ENCODE measurements at regions of chr1 and their contacts with region 1.

Region 1: GRCh38 chr1:112833806-112834205 is 118.7 kb upstream of the PPM1J start:
- DNase-seq: no peak
- H3K4me3 ChIP-seq: no peak overlapping the region
- H3K27ac ChIP-seq: no peak overlapping the region
- H3K4me1 ChIP-seq: no peaks in the 10 kb centered on the region
- CTCF ChIP-seq: no peak

Region 2: DNA sequence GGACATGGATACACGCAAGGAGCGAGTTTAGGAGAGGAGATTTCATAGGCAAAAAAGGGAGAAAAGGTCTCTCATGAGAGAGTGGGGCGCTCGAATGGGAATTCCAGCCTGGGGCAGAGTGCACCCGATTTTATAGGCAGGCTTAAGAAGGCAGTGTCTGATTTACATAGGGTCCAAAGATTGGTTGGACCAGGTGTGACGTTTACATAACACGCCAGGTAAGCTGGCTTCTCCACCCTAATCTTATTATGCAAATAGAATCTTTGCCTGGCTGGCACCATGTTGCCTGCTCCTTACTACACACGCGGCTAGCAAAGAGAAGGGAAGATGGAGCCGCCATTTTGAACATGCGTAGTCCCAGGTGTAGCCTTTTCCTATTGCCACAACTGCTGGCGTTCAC is 18.4 kb after region 1 on chr1:
- CTCF ChIA-PET with region 1: no interaction called
- POLR2A ChIA-PET with region 1: no interaction called
- intact Hi-C with region 1: loop called (anchors 2 kb)
- DNase-seq: no peak
- H3K4me3 ChIP-seq: no peak overlapping the region
- H3K27ac ChIP-seq: no peak overlapping the region
- H3K4me1 ChIP-seq: no peaks in the 10 kb centered on the region
- CTCF ChIP-seq: no peak

Measured in OCI-LY7 (cell line).